HCT116 (cell line): ENCODE measurements at regions of chr3 and their contacts with region 1.

Region 1: DNA sequence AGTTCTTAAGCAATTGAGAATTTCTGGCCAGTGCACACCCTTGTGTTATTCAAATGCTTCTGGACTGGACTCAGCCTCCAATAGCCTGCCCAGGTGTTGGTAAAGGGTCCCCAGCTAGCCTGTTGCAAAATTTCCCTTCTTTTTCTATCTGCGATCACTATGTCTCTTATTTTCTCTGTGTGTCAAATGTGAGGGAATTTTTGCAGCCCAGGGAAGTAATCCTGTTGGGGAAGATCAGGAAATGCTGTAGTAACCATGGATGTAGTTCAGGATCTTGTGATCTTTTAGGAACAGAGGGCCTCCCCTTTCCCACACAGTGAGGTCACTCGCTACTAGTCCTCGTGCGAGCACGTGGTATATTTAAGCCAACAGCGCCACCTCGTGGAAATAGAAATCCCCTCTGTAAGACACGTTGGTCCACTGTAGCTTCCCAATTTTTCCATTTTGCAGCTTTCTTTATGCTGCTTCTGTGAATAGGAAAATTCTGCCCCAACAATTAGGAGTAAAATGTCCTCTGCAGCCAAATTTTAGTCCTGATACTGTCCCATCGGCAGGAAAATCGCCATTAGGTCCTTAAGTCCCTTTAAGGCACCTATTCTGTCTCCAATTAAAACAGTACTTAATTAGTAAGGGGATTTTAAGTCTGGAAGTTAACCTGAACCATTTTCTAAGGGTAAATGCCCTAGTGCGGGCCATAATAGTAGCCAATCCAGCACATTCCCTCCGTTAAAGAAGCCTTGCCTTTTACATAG is 4.0 kb upstream of the SMCO1 start:
- DNase-seq: peak; percentile 86
- ATAC-seq: peak; percentile 94
- H3K4me3 ChIP-seq: no peak overlapping the region
- H3K27ac ChIP-seq: no peak overlapping the region
- H3K4me1 ChIP-seq: peaks cover 2 to 7% of the 10 kb centered on the region in 2 experiments; a peak in 2 of 4 replicates
- H3K27me3 ChIP-seq: no peaks in the 10 kb centered on the region
- CTCF ChIP-seq: peak; percentile 57 to 91 (median 87)
- POLR2A ChIP-seq: no peak
- RAD21 ChIP-seq: peak; percentile 99

Region 2: GRCh38 chr3:195863121-195864006 is 655.8 kb before region 1 on chr3:
- CTCF ChIA-PET with region 1: interaction called, 6 read pairs
- POLR2A ChIA-PET with region 1: no interaction called
- RAD21 ChIA-PET with region 1: no interaction called
- intact Hi-C with region 1: loop called (anchors 1 kb)
- DNase-seq: peak; percentile 42
- ATAC-seq: peak; percentile 97
- H3K4me3 ChIP-seq: no peak overlapping the region
- H3K27ac ChIP-seq: peak overlapping the region; percentile 25; the same call in 1 of the 2 replicates
- H3K4me1 ChIP-seq: peaks cover 0 to 21% of the 10 kb centered on the region in 2 experiments; a peak in 2 of 4 replicates
- H3K27me3 ChIP-seq: no peaks in the 10 kb centered on the region
- CTCF ChIP-seq: peak; percentile 88 to 97 (median 97)
- POLR2A ChIP-seq: no peak
- RAD21 ChIP-seq: peak; percentile 97

Region 3: DNA sequence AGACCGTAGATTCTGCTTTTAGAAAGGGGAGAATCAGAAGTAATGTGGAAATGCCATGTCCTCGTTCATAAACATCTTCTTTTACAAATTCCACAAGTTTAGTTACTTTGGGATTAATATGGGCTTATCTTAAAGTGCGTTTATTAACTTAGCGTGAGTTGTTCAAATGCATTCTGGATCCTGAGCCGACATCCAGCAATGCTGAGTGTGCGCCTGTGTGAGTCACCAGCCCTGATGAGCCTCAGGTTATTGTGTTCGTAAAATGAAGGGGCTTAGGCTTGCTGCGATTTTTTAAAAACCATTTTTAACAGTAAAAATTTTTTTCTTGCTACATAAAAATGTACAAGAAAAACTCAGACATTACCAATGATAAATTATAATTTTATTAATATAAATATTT is 495.2 kb before region 1 on chr3:
- CTCF ChIA-PET with region 1: interaction called, 12 read pairs
- POLR2A ChIA-PET with region 1: no interaction called
- RAD21 ChIA-PET with region 1: no interaction called
- intact Hi-C with region 1: loop called (anchors 2 kb)
- DNase-seq: no peak
- ATAC-seq: no peak
- H3K4me3 ChIP-seq: no peak overlapping the region
- H3K27ac ChIP-seq: no peak overlapping the region
- H3K4me1 ChIP-seq: no peaks in the 10 kb centered on the region
- H3K27me3 ChIP-seq: no peaks in the 10 kb centered on the region
- CTCF ChIP-seq: no peak
- POLR2A ChIP-seq: no peak
- RAD21 ChIP-seq: no peak

Region 4: GRCh38 chr3:196073188-196073838 is 445.8 kb before region 1 on chr3:
- CTCF ChIA-PET with region 1: interaction called, 13 read pairs
- POLR2A ChIA-PET with region 1: no interaction called
- RAD21 ChIA-PET with region 1: no interaction called
- intact Hi-C with region 1: loop called (anchors 2 kb)
- DNase-seq: peak; percentile 35
- ATAC-seq: peak; percentile 96
- H3K4me3 ChIP-seq: no peak overlapping the region
- H3K27ac ChIP-seq: no peak overlapping the region
- H3K4me1 ChIP-seq: no peaks in the 10 kb centered on the region
- H3K27me3 ChIP-seq: no peaks in the 10 kb centered on the region
- CTCF ChIP-seq: peak; percentile 56 to 80 (median 76); a peak in 5 of 6 replicates
- POLR2A ChIP-seq: no peak
- RAD21 ChIP-seq: peak; percentile 82

Region 5: DNA sequence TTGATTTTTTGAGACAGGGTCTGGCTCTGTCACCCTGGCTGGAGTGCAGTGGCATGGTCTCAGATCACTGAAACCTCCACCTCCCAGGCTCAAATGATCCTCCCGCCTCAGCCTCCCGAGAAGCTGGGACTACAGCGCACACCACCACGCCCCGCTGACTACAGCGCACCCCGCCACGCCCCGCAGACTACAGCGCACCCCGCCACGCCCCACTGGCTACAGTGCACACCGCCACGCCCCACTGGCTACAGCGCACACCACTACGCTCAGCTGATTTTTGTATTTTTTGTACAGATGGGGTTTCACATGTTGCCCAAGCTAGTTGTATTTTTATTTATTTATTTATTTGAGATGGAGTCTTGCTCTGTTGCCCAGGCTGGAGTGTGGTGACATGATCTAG is 267.2 kb before region 1 on chr3:
- CTCF ChIA-PET with region 1: interaction called, 16 read pairs
- POLR2A ChIA-PET with region 1: no interaction called
- RAD21 ChIA-PET with region 1: interaction called, 5 to 6 read pairs
- intact Hi-C with region 1: loop called (anchors 1 kb)
- DNase-seq: no peak
- ATAC-seq: no peak
- H3K4me3 ChIP-seq: no peak overlapping the region
- H3K27ac ChIP-seq: no peak overlapping the region
- H3K4me1 ChIP-seq: no peaks in the 10 kb centered on the region
- H3K27me3 ChIP-seq: no peaks in the 10 kb centered on the region
- CTCF ChIP-seq: no peak
- POLR2A ChIP-seq: no peak
- RAD21 ChIP-seq: no peak

Region 6: DNA sequence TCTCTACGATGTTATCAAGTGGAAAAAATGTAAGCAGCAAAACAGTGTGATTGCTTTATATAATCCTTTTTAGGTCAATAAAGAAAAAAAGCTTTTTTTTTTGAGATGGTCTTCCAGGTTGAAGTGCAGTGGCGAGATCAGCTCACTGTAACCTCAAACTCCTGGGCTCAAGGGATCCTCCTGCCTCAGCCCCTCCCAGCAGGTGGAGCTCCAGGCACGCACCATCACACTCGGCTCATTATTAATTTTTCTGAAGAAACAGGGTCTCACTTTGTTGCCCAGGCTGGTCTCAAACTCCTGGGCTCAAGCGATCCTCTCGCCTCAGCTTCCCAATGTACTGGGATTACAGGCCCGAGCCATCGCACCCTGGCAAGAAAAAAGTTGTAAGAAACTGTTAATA is 32.9 kb before region 1 on chr3:
- CTCF ChIA-PET with region 1: interaction called, 10 read pairs
- POLR2A ChIA-PET with region 1: no interaction called
- RAD21 ChIA-PET with region 1: interaction called in 1 of 2 experiments, 3 read pairs
- intact Hi-C with region 1: loop called (anchors 2 kb)
- DNase-seq: no peak
- ATAC-seq: peak; percentile 83
- H3K4me3 ChIP-seq: no peak overlapping the region
- H3K27ac ChIP-seq: no peak overlapping the region
- H3K4me1 ChIP-seq: no peaks in the 10 kb centered on the region
- H3K27me3 ChIP-seq: no peaks in the 10 kb centered on the region
- CTCF ChIP-seq: peak in 2 of 3 experiments; percentile 35 to 42; a peak in 4 of 6 replicates
- POLR2A ChIP-seq: no peak
- RAD21 ChIP-seq: peak; percentile 49; the same call in 1 of the 2 replicates

Region 7: GRCh38 chr3:197155046-197155445 is 635.9 kb after region 1 on chr3:
- CTCF ChIA-PET with region 1: no interaction called
- POLR2A ChIA-PET with region 1: no interaction called
- RAD21 ChIA-PET with region 1: no interaction called
- intact Hi-C with region 1: no loop called
- DNase-seq: no peak
- ATAC-seq: no peak
- H3K4me3 ChIP-seq: no peak overlapping the region
- H3K27ac ChIP-seq: no peak overlapping the region
- H3K4me1 ChIP-seq: peaks cover 0 to 8% of the 10 kb centered on the region in 2 experiments; a peak in 3 of 4 replicates
- H3K27me3 ChIP-seq: no peaks in the 10 kb centered on the region
- CTCF ChIP-seq: no peak
- POLR2A ChIP-seq: no peak
- RAD21 ChIP-seq: no peak